PC-9 (cell line): ENCODE measurements at regions of chr5 and their contacts with region 1.

Region 1: DNA sequence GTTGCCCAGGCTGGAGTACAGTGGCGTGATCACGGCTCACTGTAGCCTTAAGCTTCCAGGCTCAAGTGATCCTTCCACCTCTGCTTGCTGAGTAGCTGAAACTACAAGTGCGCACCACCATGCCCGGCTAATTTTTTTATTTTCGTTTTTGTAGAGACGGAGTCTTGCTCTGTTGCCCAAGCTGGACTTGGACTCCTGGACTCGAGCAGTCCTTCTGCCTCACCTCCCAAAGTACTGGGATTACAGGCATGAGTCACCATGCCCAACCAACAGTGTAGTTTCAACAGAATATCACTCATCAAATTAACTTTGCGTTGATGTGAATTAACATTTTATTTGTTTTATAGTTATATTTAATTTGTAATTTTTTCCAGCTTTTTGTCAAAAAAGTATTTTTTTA is 45.3 kb downstream of the WDR70 start:
- DNase-seq: no peak
- H3K4me3 ChIP-seq: no peak overlapping the region
- H3K27ac ChIP-seq: no peak overlapping the region
- H3K4me1 ChIP-seq: no peaks in the 10 kb centered on the region
- H3K27me3 ChIP-seq: no peaks in the 10 kb centered on the region
- CTCF ChIP-seq: no peak

Region 2: GRCh38 chr5:37685213-37685612 is 260.8 kb after region 1 on chr5:
- CTCF ChIA-PET with region 1: no interaction called
- POLR2A ChIA-PET with region 1: interaction called, 23 read pairs
- intact Hi-C with region 1: no loop called
- DNase-seq: no peak
- H3K4me3 ChIP-seq: no peak overlapping the region
- H3K27ac ChIP-seq: no peak overlapping the region
- H3K4me1 ChIP-seq: no peaks in the 10 kb centered on the region
- H3K27me3 ChIP-seq: no peaks in the 10 kb centered on the region
- CTCF ChIP-seq: no peak